Prostate gland (tissue), 2 donors: ENCODE measurements at regions of chr2 and their contacts with region 1.

Region 1: GRCh38 chr2:36408198-36408703 is 52.7 kb downstream of the CRIM1 start:
- DNase-seq: no peak
- H3K4me3 ChIP-seq: no peak overlapping the region
- H3K27ac ChIP-seq: no peak overlapping the region
- H3K4me1 ChIP-seq: no peaks in the 10 kb centered on the region
- H3K27me3 ChIP-seq: no peaks in the 10 kb centered on the region
- CTCF ChIP-seq: no peak
- POLR2A ChIP-seq: no peak

Region 2: DNA sequence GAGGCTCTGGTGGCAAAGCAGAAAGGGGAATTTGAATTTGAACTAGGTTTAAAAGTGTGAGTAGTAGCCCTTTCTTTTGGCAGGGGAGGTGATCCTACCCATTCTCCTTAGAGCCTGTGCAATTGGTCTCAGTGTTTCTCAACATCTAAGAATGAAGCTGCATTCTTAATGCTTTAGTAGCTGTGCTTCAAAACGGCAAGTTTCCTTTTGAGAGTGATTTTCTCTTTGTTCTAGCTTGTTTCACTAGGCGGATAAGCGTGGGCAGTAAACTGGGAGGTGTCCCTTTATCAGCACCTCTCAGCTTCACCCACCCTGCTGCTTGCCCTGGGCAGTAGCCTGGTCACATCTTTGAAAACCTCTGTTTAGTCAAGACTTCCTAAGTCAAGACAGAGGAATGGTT is 46.0 kb before region 1 on chr2:
- intact Hi-C with region 1: loop called (anchors 5 kb)
- DNase-seq: no peak
- H3K4me3 ChIP-seq: no peak overlapping the region
- H3K27ac ChIP-seq: no peak overlapping the region
- H3K4me1 ChIP-seq: no peaks in the 10 kb centered on the region
- H3K27me3 ChIP-seq: no peaks in the 10 kb centered on the region
- CTCF ChIP-seq: no peak
- POLR2A ChIP-seq: no peak